Activated CD4-positive, alpha-beta T cell treated with anti-CD3 and anti-CD28 coated beads for 36 hours (primary cell): ENCODE measurements at regions of chr17 and their contacts with region 1.

Region 1: DNA sequence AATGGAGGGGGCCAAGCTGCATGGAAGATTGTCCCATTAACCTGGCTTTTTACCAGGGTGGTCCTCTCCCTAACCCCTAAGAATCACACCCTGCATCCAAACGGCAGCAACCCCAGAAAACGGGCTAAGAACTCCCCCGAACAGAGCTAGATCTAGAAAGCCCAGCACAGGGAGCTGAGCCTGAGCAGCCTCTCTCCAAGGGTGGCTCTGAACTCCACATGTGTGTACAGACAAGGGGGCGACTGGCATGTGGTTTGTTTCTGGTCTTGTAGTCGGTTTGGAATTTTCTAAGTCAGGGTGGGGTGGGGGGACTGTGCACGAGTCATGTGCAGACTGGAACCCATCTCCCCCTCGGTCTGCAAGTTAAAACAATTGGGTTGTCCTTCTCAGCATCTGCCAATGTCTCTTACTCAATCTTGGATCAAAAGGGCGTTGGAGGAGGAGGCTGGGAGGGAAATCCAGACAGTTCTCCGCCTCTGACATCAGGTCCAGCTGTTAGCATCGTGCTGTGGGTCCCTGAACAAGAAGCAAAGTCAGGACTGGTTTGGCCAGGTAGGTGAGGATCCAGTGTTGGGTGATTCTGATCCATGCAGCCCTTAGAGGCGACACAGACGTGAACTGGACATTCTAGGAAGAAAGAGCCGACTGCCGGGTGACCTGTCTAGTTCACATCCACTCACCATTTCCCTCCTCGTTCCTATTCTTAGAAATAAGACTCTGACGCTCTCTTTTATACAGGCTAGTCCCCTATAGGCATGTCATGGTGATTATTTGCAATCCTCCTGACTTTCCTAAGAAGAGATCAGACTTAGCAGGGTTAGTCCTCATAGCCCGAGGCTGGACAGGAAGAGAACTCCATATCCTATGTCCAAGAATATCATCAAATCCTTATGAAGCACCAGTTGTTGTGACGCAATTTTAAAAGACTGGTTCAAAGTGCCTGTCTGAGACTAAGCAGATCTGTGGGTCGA is 381.8 kb downstream of the SOX9 start:
- DNase-seq: no peak
- ATAC-seq: no peak
- H3K4me3 Mint-ChIP-seq: no peak overlapping the region
- H3K27ac Mint-ChIP-seq: no peak overlapping the region
- H3K4me1 Mint-ChIP-seq: no peaks in the 10 kb centered on the region
- H3K27me3 Mint-ChIP-seq: peaks cover 3% of the 10 kb centered on the region

Region 2: DNA sequence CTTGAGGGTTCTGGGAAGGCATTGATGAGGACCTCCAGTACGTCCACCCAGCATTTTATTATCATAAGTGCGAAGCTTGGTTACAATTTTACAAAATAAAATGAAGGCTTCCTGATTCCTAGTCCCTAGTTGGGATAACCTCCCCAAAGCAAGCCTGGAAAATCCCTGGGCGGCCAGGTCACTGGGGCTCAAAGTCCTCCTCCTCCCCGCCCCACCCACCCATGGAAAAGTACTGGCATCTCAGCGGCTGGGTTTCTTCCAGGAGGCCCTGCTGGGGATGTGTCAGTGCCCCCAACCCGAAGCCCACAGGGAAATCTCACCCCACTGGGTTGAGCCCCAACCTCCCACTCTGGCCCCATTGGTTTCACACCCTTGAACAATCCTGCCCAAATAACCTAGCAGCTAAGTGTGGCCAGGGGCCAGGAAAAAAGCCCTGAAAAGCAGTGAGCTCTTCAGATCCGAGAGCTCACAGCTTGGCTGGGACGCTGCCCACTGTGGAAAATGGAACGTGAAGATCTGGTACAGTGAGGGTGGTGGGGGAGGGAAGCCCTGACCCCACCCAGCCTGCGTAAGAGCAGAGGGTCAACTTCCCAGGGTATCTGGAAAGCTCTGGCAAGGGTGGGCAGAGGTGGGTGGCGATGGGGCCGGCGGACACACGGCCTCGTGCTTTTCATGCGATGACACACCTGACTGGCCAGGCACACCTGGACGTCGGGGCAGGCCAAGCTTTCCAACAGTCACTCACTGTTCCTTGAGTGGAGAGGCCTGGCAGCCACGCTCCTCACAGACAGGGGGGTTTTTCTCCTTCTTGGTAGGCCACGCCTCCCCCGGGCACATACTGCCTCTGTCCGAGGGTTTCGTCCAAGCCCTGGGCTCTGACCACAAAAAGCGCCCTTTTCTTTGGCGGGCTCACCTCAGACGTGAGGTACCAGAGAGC is 57.3 kb before region 1 on chr17:
- CTCF ChIA-PET with region 1: no interaction called
- POLR2A ChIA-PET with region 1: no interaction called
- intact Hi-C with region 1: loop called in 1 of 2 experiments (anchors 10 kb)
- DNase-seq: no peak
- ATAC-seq: no peak
- H3K4me3 Mint-ChIP-seq: no peak overlapping the region
- H3K27ac Mint-ChIP-seq: no peak overlapping the region
- H3K4me1 Mint-ChIP-seq: no peaks in the 10 kb centered on the region
- H3K27me3 Mint-ChIP-seq: no peaks in the 10 kb centered on the region